Activated naive CD4-positive, alpha-beta T cell treated with anti-CD3 and anti-CD28 coated beads for 36 hours (primary cell): ENCODE measurements at regions of chrX and their contacts with region 1.

Region 1: GRCh38 chrX:46642145-46642544 is 68.6 kb downstream of the CHST7 start:
- DNase-seq: peak; percentile 6
- H3K4me3 Mint-ChIP-seq: no peak overlapping the region
- H3K27ac Mint-ChIP-seq: no peak overlapping the region
- H3K4me1 Mint-ChIP-seq: peaks cover 9% of the 10 kb centered on the region
- H3K27me3 Mint-ChIP-seq: no peaks in the 10 kb centered on the region

Region 2: GRCh38 chrX:46268429-46268828 is 373.7 kb before region 1 on chrX:
- CTCF ChIA-PET with region 1: no interaction called
- intact Hi-C with region 1: no loop called
- DNase-seq: peak; percentile 54
- H3K4me3 Mint-ChIP-seq: no peak overlapping the region
- H3K27ac Mint-ChIP-seq: no peak overlapping the region
- H3K4me1 Mint-ChIP-seq: peaks cover 16% of the 10 kb centered on the region
- H3K27me3 Mint-ChIP-seq: no peaks in the 10 kb centered on the region

Region 3: DNA sequence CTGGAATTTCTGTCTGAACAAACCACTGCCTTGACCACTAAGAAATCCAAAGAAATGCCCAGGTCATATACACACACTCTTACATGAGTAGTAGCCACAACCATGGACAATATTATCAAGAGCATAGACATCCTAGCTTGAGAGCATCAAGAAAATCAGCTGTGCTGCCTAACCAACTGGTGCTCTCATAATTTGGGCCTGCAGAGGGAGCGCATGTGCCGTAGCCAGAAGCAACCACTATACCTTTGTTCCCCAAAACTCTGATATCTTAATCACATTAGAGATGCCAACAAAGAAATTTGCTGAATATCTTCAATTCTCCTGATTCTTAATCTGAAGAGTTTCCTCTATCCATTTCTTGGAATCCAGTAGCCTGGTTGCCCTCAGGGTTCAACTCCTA is 260.5 kb before region 1 on chrX:
- CTCF ChIA-PET with region 1: no interaction called
- intact Hi-C with region 1: loop called (anchors 5 kb)
- DNase-seq: peak; percentile 58
- H3K4me3 Mint-ChIP-seq: no peak overlapping the region
- H3K27ac Mint-ChIP-seq: no peak overlapping the region
- H3K4me1 Mint-ChIP-seq: no peaks in the 10 kb centered on the region
- H3K27me3 Mint-ChIP-seq: no peaks in the 10 kb centered on the region

Region 4: GRCh38 chrX:46601283-46601682 is 40.9 kb before region 1 on chrX:
- CTCF ChIA-PET with region 1: no interaction called
- intact Hi-C with region 1: no loop called
- DNase-seq: no peak
- H3K4me3 Mint-ChIP-seq: no peak overlapping the region
- H3K27ac Mint-ChIP-seq: no peak overlapping the region
- H3K4me1 Mint-ChIP-seq: no peaks in the 10 kb centered on the region
- H3K27me3 Mint-ChIP-seq: no peaks in the 10 kb centered on the region

Region 5: DNA sequence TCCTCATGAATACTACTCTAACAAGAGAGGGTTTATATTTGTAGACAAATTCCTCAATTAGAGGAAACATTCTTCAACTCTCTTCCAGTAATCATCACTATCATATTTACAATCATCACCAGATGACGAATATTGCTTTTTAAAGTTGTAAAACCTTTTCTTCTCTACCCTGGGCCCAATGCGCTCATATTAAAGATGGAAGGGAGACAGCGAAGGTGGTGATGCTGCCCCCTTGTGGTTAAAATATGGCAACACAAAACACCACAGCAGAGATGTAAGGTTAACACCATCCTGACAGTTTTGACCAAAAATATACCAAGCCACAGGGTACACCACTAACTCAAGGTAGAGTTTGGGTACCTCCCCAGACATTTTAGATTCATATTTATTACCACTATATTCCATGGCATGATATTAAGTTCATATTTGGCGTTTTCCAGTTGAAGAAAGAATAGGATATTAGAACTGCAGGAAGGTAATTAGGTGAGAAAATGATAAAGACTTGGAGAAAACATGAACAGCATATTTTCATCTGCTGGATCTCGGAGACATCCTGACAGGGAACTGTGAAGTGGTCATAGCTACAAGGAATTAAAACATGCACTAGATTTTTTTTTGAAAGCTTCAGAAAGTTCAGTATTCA is 44.0 kb after region 1 on chrX:
- CTCF ChIA-PET with region 1: no interaction called
- intact Hi-C with region 1: loop called (anchors 1 kb)
- DNase-seq: peak; percentile 62
- H3K4me3 Mint-ChIP-seq: no peak overlapping the region
- H3K27ac Mint-ChIP-seq: no peak overlapping the region
- H3K4me1 Mint-ChIP-seq: peaks cover 12% of the 10 kb centered on the region
- H3K27me3 Mint-ChIP-seq: no peaks in the 10 kb centered on the region

Region 6: GRCh38 chrX:46796574-46797191 is 154.5 kb after region 1 on chrX:
- CTCF ChIA-PET with region 1: no interaction called
- intact Hi-C with region 1: loop called (anchors 5 kb)
- DNase-seq: peak; percentile 86
- H3K4me3 Mint-ChIP-seq: no peak overlapping the region
- H3K27ac Mint-ChIP-seq: no peak overlapping the region
- H3K4me1 Mint-ChIP-seq: peaks cover 18% of the 10 kb centered on the region
- H3K27me3 Mint-ChIP-seq: no peaks in the 10 kb centered on the region